Mammary epithelial cell (primary cell): ENCODE measurements at regions of chrX and their contacts with region 1.

Region 1: DNA sequence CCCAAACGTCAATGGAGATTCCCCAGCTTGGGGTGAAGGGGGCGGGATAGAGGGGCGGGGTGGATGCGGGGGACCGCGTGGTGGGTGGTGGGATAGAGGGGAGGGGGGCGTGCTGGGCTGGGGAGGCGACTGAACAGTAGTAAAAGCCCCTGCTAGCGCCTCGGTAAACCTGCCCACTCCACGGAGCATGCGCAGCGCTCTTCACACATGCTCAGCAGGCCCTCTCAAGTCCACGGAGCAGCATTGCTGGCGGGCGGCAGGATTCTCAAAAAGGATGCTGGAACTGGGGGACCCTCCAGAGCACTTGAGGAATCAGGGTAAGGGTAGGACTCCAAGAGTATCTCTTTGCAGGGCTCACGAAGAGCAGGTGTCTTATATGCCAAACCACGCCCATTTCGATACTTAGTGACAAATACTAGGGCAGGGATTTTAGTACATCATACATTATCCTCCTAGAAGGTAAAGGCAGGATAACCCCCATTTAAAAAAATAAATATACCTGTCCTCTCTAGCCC is 378 bp upstream of the RPS6KA6 start:
- DNase-seq: peak; percentile 14
- H3K4me3 ChIP-seq: peak overlapping the region; percentile 61 to 73 (median 64)
- H3K27ac ChIP-seq: no peak overlapping the region
- H3K4me1 ChIP-seq: peaks cover 5% of the 10 kb centered on the region
- H3K27me3 ChIP-seq: no peaks in the 10 kb centered on the region
- CTCF ChIP-seq: peak in 1 of 2 donors; percentile 21

Region 2: DNA sequence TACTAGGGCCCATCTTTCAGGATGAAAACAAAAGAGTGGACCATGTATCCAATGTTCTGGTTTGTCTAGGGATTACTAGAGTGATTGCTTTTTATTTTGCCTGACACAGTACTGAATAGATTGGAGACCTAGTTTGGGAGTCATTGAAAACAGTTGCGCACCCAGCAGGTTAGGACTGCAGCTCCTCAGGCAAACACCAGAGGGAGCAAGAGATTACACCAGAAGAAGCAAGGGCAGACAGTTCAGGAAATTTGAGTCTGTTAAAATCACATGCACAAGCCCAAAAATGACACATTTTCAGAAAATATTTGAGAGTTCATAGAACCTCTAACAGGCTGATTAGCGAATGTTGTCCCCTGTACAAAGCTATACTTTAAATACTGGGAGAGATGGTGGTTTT is 271.9 kb before region 1 on chrX:
- CTCF ChIA-PET with region 1: no interaction called
- dilution Hi-C with region 1: no loop called
- in situ Hi-C with region 1: no loop called
- intact Hi-C with region 1: loop called (anchors 10 kb)
- DNase-seq: peak; percentile 6
- H3K4me3 ChIP-seq: no peak overlapping the region
- H3K27ac ChIP-seq: no peak overlapping the region
- H3K4me1 ChIP-seq: no peaks in the 10 kb centered on the region
- H3K27me3 ChIP-seq: no peaks in the 10 kb centered on the region
- CTCF ChIP-seq: peak; percentile 68 to 69

Region 3: DNA sequence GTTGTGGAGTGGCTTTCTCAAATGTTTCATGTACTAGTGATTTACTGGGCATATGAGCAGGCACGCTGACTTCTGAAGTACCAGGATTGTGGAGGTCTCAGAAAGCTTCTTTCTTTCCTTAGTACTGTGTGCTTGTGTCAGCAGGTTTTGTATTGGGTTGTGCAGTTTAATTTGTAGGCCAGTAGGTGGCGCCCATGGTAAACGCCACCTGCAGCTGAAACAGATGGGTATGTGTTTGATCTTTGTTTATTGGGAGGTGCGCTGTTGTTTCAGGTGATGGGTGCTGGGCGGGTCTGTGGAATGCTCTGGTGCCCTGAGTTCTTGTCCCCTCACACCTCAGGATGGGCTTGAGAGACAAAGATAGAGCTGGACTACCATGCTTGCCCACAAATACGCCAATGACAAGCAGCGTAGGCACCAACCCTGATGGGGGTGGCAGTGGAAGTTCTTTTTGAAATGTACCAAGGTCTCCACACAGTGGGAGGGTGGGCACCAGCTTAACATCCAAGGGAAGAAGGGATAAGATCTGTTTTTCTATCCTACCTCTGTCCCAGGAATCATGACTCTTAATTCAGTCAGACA is 141.9 kb before region 1 on chrX:
- CTCF ChIA-PET with region 1: no interaction called
- dilution Hi-C with region 1: no loop called
- in situ Hi-C with region 1: no loop called
- intact Hi-C with region 1: loop called (anchors 1 kb)
- DNase-seq: peak; percentile 27
- H3K4me3 ChIP-seq: no peak overlapping the region
- H3K27ac ChIP-seq: no peak overlapping the region
- H3K4me1 ChIP-seq: no peaks in the 10 kb centered on the region
- H3K27me3 ChIP-seq: no peaks in the 10 kb centered on the region
- CTCF ChIP-seq: peak; percentile 78 to 82

Region 4: DNA sequence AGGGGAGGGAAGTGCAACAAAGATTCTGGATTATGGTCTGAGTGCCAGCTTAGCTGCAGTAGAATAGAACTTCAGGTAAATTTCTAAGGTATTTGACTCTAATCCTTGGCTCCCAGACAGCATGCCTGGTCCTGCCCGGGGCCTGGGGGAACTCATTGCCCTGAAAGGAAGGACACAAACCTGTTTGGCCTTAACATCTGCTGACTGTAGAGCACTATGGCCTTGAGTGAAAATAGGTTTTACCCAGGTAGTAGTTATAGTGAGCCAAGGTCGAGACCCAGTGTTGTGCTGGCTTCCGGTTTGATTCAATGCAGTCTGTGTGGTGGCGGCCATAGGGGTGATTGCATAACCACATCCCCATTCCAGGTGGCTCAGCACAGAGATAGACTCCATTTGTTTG is 64.8 kb before region 1 on chrX:
- CTCF ChIA-PET with region 1: no interaction called
- dilution Hi-C with region 1: no loop called
- in situ Hi-C with region 1: no loop called
- intact Hi-C with region 1: no loop called
- DNase-seq: peak; percentile 65
- H3K4me3 ChIP-seq: no peak overlapping the region
- H3K27ac ChIP-seq: no peak overlapping the region
- H3K4me1 ChIP-seq: peaks cover 6% of the 10 kb centered on the region
- H3K27me3 ChIP-seq: no peaks in the 10 kb centered on the region
- CTCF ChIP-seq: no peak

Region 5: GRCh38 chrX:84153538-84153937 is 34.8 kb before region 1 on chrX:
- CTCF ChIA-PET with region 1: no interaction called
- dilution Hi-C with region 1: no loop called
- in situ Hi-C with region 1: no loop called
- intact Hi-C with region 1: no loop called
- DNase-seq: peak; percentile 41
- H3K4me3 ChIP-seq: no peak overlapping the region
- H3K27ac ChIP-seq: no peak overlapping the region
- H3K4me1 ChIP-seq: peaks cover 6% of the 10 kb centered on the region
- H3K27me3 ChIP-seq: no peaks in the 10 kb centered on the region
- CTCF ChIP-seq: no peak

Region 6: DNA sequence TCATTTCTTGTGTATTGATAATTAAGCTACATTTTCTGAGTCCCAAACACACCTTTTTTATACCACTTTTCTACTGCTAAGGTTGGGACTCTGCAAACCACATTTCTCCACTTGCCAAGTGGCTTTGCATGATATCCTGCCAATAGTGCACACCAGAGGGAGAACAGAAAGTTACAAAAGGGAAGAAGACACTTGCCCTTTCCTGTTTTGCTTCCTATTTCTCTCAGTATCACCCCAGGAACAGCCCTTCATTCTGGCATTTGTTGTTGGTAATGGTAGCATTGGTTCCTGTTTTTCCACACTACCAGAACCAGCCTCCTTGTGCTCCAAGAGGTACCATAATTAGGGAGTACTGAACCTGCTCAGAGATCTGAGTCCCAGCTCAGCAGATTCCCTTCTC is 226.8 kb after region 1 on chrX:
- CTCF ChIA-PET with region 1: no interaction called
- dilution Hi-C with region 1: no loop called
- in situ Hi-C with region 1: no loop called
- intact Hi-C with region 1: no loop called
- DNase-seq: no peak
- H3K4me3 ChIP-seq: no peak overlapping the region
- H3K27ac ChIP-seq: no peak overlapping the region
- H3K4me1 ChIP-seq: no peaks in the 10 kb centered on the region
- H3K27me3 ChIP-seq: no peaks in the 10 kb centered on the region
- CTCF ChIP-seq: no peak